Heart right ventricle (tissue), 16 donors: ENCODE measurements at regions of chr11 and their contacts with region 1.

Region 1: DNA sequence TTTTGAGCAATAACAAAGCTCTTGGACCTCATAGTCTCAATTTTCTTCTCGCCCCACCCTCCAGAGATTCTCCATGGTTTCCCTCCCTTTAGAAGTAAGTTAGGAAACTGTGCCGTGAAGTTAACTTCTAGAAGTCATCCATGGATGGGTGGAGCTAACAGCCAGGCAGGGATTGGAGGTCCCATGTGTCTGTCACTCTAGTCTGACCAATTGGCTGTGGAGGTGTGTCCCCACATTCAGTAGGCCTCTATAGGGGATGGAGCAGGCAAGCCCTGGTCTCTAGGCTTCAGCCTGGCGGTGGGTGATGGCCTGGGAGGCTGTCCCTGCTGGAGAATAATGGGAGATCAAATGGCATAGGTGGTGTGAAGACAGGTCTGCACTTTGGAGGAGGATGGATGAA is 50.7 kb downstream of the TP53I11 start:
- DNase-seq: no peak
- ATAC-seq: peak in 6 of 8 donors; percentile 40 to 56 (median 48)
- H3K4me3 ChIP-seq: no peak overlapping the region
- H3K27ac ChIP-seq: no peak overlapping the region
- H3K4me1 ChIP-seq: peaks cover 0 to 12% (median 0%) of the 10 kb centered on the region in 9 donors
- H3K27me3 ChIP-seq: no peaks in the 10 kb centered on the region
- CTCF ChIP-seq: no peak

Region 2: GRCh38 chr11:44621140-44621681 is 278.7 kb before region 1 on chr11:
- intact Hi-C with region 1: loop called in 2 of 10 experiments (anchors 5 kb)
- DNase-seq: peak; percentile 76 to 83
- ATAC-seq: peak; percentile 62 to 82 (median 70)
- H3K4me3 ChIP-seq: peak overlapping the region in 6 of 10 donors; percentile 10 to 39 (median 33)
- H3K27ac ChIP-seq: no peak overlapping the region
- H3K4me1 ChIP-seq: peaks cover 12 to 54% (median 37%) of the 10 kb centered on the region in 9 donors
- H3K27me3 ChIP-seq: no peaks in the 10 kb centered on the region
- CTCF ChIP-seq: peak; percentile 97 to 99 (median 98)

Region 3: DNA sequence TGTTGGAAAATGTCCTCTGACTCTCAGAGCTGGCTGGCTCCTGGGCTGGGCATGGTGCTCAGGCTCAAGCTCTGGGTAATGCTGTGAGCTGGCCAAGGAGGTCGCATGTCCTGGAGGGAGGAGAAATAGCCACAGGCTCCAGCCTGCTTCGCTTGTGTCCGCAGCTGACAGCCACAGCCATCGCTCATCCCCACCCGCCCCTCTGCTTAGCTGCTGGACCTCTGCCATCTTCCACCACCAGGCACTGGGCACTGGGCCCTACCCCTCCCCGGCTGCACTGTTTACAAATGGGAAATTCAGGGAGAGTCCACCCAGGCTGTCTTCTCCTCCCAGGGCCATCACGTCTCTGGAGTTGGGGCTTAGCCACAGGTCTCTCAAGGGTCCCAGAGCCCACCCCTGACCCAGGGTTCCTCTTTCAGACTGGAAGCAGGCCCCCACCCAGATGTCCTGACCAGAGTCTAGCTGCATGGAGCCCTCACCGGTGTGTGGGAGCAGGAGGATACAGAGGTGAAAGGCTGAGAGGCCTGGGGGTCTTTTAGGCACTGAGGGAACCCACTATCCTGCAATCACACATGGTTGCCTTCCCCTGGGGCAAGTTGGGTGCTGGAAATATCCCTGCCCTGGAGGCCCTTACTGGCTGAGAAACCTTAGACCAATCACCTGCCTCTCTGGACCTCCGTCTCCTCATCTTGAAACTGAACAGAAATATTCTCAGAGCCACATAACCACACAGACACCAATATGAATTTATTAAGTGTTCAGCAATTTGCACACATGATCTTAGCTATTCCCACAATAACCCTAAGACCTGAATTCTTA is 271.8 kb before region 1 on chr11:
- intact Hi-C with region 1: loop called in 2 of 10 experiments (anchors 5 kb)
- DNase-seq: peak; percentile 77 to 83
- ATAC-seq: peak; percentile 71 to 89 (median 82)
- H3K4me3 ChIP-seq: no peak overlapping the region
- H3K27ac ChIP-seq: peak overlapping the region; percentile 17 to 84 (median 72)
- H3K4me1 ChIP-seq: peaks cover 12 to 73% (median 54%) of the 10 kb centered on the region in 9 donors
- H3K27me3 ChIP-seq: no peaks in the 10 kb centered on the region
- CTCF ChIP-seq: no peak

Region 4: DNA sequence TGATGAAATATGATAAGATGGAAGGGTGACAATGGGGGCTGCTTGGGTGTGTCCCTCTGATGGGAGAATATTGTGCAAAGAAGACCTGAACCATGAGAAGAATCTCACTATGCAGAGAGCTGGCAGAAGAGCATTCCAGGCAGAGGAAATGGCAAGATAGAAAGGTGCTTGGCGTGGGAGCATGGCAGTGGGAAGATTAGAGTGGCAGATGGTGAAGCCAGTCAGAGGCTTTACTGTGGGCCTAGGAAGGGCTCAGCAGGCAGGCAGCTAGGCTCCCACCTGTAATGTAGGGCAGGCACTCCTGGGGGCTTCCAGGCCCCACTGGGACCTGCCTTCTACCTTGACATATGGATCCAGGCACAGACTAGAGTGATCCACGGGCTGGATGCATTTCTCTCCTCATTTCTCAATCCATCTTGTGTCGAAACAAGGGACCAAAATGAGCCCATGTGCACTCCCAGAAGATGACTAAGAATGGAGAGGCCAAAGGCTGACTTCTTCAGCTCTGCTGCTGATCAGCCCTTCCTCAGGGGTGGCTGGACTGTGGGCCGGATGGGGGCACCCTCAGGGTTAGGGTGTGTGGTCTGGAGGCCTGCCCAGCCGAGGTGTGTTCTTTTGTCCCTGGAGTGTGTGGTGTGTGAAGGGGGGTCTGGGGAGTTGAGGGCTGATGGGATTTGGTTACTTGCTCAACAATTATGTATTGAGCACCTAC is 84.9 kb before region 1 on chr11:
- intact Hi-C with region 1: no loop called
- DNase-seq: no peak
- ATAC-seq: peak in 2 of 8 donors; percentile 22 to 23
- H3K4me3 ChIP-seq: no peak overlapping the region
- H3K27ac ChIP-seq: peak overlapping the region in 7 of 10 donors; percentile 29 to 72 (median 42)
- H3K4me1 ChIP-seq: peaks cover 18 to 100% (median 81%) of the 10 kb centered on the region in 9 donors
- H3K27me3 ChIP-seq: no peaks in the 10 kb centered on the region
- CTCF ChIP-seq: no peak